ENCODE measurements at regions of chr13 and their contacts with region 1.

Region 1: DNA sequence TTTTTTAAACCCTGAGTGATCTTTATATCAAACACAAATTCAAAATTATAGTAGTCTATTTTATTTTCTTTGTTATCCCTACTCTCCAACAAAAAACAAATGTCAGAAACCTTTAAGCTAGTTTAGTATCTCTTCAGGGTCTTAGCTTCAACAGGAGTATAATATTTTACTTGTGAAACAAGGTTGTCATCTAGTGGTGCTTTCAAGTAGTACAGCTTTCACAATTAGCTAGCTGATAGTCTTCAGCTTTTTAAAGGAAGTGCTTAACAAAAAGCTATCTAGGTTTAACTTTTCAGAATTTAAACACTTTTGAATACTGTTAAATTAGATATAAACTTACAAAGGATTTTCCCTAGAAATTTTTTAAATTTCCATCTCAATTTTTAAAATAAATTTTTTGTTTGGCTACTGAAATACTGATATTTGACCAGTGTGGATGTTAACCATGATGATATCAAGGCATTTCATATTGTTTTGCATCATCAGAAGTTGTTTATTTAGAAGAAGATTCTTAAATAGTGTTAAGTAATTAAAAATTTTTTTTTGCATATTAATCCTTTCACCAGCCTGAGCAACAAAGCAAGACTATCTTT is 34.2 kb downstream of the TDRD3 start:
- DNase-seq: peak; percentile 46
- ATAC-seq: peak; percentile 79
- H3K4me3 ChIP-seq: no peak overlapping the region
- H3K27ac ChIP-seq: no peak overlapping the region
- H3K4me1 ChIP-seq: no peaks in the 10 kb centered on the region
- H3K27me3 ChIP-seq: no peaks in the 10 kb centered on the region
- CTCF ChIP-seq: peak; percentile 30 to 92 (median 76); a peak in 5 of 6 replicates
- POLR2A ChIP-seq: no peak
- RAD21 ChIP-seq: peak; percentile 68

Region 2: DNA sequence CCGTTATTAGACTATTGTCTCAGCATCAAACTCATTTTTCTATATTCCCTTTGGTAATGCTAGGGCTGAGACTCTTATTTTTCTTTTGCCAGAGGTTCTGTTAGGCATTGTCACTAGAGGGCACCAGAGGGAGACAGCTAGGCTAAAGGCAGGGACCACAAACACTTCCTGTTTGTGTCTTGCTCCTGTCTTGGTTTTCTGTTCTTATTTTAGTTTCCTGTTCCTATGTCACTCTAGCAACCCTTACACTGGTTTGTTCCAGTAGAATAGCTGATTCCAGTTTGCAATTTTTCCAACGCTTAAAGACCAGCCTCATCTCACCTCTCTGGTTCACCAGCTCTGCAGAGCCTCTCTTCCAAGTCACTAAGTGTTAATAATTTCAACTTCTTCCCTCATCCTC is 1039.5 kb before region 1 on chr13:
- CTCF ChIA-PET with region 1: interaction called, 3 read pairs
- POLR2A ChIA-PET with region 1: no interaction called
- RAD21 ChIA-PET with region 1: no interaction called
- intact Hi-C with region 1: loop called (anchors 5 kb)
- DNase-seq: peak; percentile 16
- ATAC-seq: peak; percentile 77
- H3K4me3 ChIP-seq: no peak overlapping the region
- H3K27ac ChIP-seq: no peak overlapping the region
- H3K4me1 ChIP-seq: no peaks in the 10 kb centered on the region
- H3K27me3 ChIP-seq: no peaks in the 10 kb centered on the region
- CTCF ChIP-seq: peak; percentile 4 to 73 (median 69); a peak in 4 of 6 replicates
- POLR2A ChIP-seq: no peak
- RAD21 ChIP-seq: peak; percentile 33; the same call in 1 of the 2 replicates

Region 3: DNA sequence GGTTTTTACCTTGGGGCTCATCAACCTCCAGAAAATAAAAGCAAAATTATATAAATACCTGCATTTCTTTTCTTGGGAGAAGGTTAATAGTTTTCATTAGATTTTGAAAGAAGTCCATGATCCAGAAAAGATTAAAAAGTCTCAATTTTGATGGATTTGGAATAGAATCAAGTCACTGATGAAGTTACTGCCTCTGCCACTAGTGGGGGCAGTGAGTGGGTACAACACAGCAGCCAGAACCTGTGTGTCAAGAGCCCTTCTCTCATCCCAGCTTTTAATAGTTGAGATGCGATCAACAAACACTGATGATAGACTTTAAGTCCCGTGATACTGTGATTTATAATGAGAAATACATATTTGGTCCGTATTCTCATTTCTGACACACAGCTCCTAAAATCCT is 954.2 kb before region 1 on chr13:
- CTCF ChIA-PET with region 1: no interaction called
- POLR2A ChIA-PET with region 1: no interaction called
- RAD21 ChIA-PET with region 1: no interaction called
- intact Hi-C with region 1: loop called (anchors 2 kb)
- DNase-seq: peak; percentile 6
- ATAC-seq: peak; percentile 52; the same call in 1 of the 2 replicates
- H3K4me3 ChIP-seq: no peak overlapping the region
- H3K27ac ChIP-seq: no peak overlapping the region
- H3K4me1 ChIP-seq: no peaks in the 10 kb centered on the region
- H3K27me3 ChIP-seq: no peaks in the 10 kb centered on the region
- CTCF ChIP-seq: peak in 2 of 3 experiments; percentile 57 to 59; a peak in 4 of 6 replicates
- POLR2A ChIP-seq: no peak
- RAD21 ChIP-seq: no peak

Region 4: DNA sequence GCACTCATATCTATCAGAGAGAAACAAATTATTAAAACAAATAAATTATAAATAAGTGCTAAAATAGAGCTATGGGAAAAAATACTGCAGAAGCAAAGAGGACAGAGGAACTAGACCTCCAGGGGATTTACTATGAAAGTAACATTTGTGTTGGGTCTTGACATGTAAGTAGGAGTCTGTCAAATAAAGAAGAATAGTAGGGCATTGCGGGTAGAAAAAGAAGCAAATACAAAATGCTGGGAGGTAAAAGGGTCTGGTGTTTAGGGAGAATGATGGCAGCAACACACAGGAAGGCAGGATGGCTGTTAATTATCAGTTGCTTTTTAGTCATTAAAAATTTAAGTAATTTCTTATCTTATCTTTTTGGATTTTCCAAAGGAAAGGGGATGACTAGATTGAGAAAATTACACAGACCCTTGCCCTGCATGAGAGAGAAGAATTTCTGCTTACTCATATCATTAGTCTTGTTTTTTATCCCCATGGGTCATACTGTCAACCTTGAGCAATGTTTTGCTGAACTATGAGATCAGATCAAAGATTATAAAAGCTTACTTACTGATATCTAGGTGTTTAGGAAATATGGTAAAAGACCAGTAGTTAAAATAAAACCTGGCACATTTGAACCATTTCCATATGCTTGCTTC is 740.2 kb before region 1 on chr13:
- CTCF ChIA-PET with region 1: interaction called, 4 read pairs
- POLR2A ChIA-PET with region 1: no interaction called
- RAD21 ChIA-PET with region 1: no interaction called
- intact Hi-C with region 1: loop called (anchors 5 kb)
- DNase-seq: no peak
- ATAC-seq: no peak
- H3K4me3 ChIP-seq: no peak overlapping the region
- H3K27ac ChIP-seq: no peak overlapping the region
- H3K4me1 ChIP-seq: no peaks in the 10 kb centered on the region
- H3K27me3 ChIP-seq: no peaks in the 10 kb centered on the region
- CTCF ChIP-seq: no peak
- POLR2A ChIP-seq: no peak
- RAD21 ChIP-seq: no peak

Region 5: GRCh38 chr13:59906413-59907049 is 524.7 kb before region 1 on chr13:
- CTCF ChIA-PET with region 1: interaction called, 3 read pairs
- POLR2A ChIA-PET with region 1: no interaction called
- RAD21 ChIA-PET with region 1: no interaction called
- intact Hi-C with region 1: loop called (anchors 5 kb)
- DNase-seq: peak; percentile 4
- ATAC-seq: peak; percentile 53; the same call in 1 of the 2 replicates
- H3K4me3 ChIP-seq: no peak overlapping the region
- H3K27ac ChIP-seq: no peak overlapping the region
- H3K4me1 ChIP-seq: no peaks in the 10 kb centered on the region
- H3K27me3 ChIP-seq: no peaks in the 10 kb centered on the region
- CTCF ChIP-seq: peak in 2 of 3 experiments; percentile 54 to 57; a peak in 4 of 6 replicates
- POLR2A ChIP-seq: no peak
- RAD21 ChIP-seq: peak; percentile 53

Region 6: DNA sequence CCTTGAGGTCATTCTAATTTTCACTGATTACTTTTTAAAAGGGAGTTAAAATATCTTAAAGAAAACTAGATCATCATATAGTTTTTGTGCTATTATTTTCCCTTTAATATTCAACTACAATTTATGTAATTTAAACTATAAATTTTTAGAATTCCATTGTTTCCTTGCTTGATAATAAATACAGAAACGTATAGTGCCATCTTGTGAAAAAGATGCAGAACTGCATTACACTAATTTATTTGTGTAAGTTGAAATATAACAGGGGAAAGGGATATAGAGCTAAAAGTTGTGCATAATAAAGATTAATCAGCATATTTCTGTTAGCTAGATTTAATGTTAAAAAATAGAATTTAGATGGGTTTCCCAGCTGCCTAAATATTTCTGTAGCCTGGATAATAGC is 95.7 kb before region 1 on chr13:
- CTCF ChIA-PET with region 1: interaction called, 12 read pairs
- POLR2A ChIA-PET with region 1: no interaction called
- RAD21 ChIA-PET with region 1: no interaction called
- intact Hi-C with region 1: no loop called
- DNase-seq: no peak
- ATAC-seq: no peak
- H3K4me3 ChIP-seq: no peak overlapping the region
- H3K27ac ChIP-seq: no peak overlapping the region
- H3K4me1 ChIP-seq: no peaks in the 10 kb centered on the region
- H3K27me3 ChIP-seq: peaks cover 19% of the 10 kb centered on the region
- CTCF ChIP-seq: peak; percentile 18 to 58 (median 37); a peak in 4 of 6 replicates
- POLR2A ChIP-seq: no peak
- RAD21 ChIP-seq: peak; percentile 52